ENCODE measurements at regions of chr17 and their contacts with region 1.

Region 1: DNA sequence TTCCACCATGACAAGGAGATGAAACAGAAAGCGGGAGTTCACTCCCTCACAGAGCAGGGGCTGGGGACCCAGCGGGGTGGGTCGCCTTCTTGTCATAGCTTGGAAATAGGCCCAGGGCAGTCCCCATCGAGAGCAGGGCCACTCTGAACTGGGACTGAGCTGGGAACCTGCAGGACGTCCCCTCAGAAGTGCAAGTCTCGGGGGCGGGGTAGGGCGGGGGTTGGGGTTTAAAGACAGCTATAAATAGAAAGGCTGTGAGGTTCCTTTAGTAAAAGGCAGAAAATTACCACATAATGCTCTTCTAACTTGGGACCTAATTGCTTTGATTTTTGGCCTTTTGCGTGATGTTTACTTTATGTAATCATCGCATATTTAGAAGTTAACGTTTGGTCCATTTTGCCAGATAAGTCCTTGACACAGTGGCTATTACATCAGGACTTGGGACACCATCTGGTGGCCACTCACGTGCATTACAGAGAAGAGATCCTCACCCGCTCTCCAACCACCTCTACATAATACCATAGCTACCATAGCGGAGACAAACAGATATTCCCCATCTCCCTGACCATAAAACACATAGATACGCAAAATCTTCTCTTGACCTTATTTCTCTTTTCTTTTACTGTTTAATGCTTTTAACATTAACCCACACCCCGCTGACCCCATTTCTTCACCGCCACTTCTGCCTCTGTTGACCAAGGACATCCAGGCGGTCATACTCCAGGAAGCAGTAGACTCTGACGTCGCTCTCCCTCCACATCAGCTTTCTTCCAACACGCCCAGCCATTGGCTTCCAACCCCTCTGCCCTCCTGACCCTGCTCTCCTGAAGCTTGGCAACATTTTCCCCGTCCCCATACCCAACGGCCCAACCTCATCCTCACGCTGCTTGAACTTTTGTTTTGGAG is 27.5 kb upstream of the PIK3R6 start:
- DNase-seq: peak in 12 of 14 experiments; percentile 23 to 79 (median 42)
- ATAC-seq: peak; percentile 20
- H3K4me3 ChIP-seq: no peak overlapping the region
- H3K4me3 Mint-ChIP-seq: peak overlapping the region; percentile 1
- H3K27ac ChIP-seq: no peak overlapping the region
- H3K27ac Mint-ChIP-seq: peak overlapping the region; percentile 93
- H3K4me1 ChIP-seq: peaks cover 61% of the 10 kb centered on the region
- H3K4me1 Mint-ChIP-seq: peaks cover 58% of the 10 kb centered on the region
- H3K27me3 ChIP-seq: no peaks in the 10 kb centered on the region
- H3K27me3 Mint-ChIP-seq: no peaks in the 10 kb centered on the region
- CTCF ChIP-seq: peak; percentile 77

Region 2: GRCh38 chr17:8383143-8383822 is 511.6 kb before region 1 on chr17 and contains the start of gene RPL26:
- CTCF ChIA-PET with region 1: no interaction called
- POLR2A ChIA-PET with region 1: no interaction called
- intact Hi-C with region 1: loop called in 1 of 2 experiments (anchors 5 kb)
- DNase-seq: peak; percentile 89 to 98 (median 93)
- ATAC-seq: peak; percentile 86
- H3K4me3 ChIP-seq: peak within 1 kb of the TSS; percentile 95
- H3K4me3 Mint-ChIP-seq: peak within 1 kb of the TSS; percentile 95
- H3K27ac ChIP-seq: peak within 1 kb of the TSS; percentile 72 to 76
- H3K27ac Mint-ChIP-seq: peak within 1 kb of the TSS; percentile 91
- H3K4me1 ChIP-seq: peaks cover 47% of the 10 kb centered on the region
- H3K4me1 Mint-ChIP-seq: peaks cover 64% of the 10 kb centered on the region
- H3K27me3 ChIP-seq: no peaks in the 10 kb centered on the region
- H3K27me3 Mint-ChIP-seq: no peaks in the 10 kb centered on the region
- CTCF ChIP-seq: peak; percentile 100
- total RNA-seq, gene RPL26: 2,959 to 3,104 TPM

Region 3: GRCh38 chr17:8753976-8754440 is 140.9 kb before region 1 on chr17:
- CTCF ChIA-PET with region 1: no interaction called
- POLR2A ChIA-PET with region 1: no interaction called
- intact Hi-C with region 1: loop called (anchors 5 to 10 kb)
- DNase-seq: peak in 2 of 14 experiments; percentile 11 to 29
- ATAC-seq: no peak
- H3K4me3 ChIP-seq: no peak overlapping the region
- H3K4me3 Mint-ChIP-seq: no peak overlapping the region
- H3K27ac ChIP-seq: no peak overlapping the region
- H3K27ac Mint-ChIP-seq: no peak overlapping the region
- H3K4me1 ChIP-seq: no peaks in the 10 kb centered on the region
- H3K4me1 Mint-ChIP-seq: no peaks in the 10 kb centered on the region
- H3K27me3 ChIP-seq: peaks cover 0 to 4% of the 10 kb centered on the region in 2 experiments
- H3K27me3 Mint-ChIP-seq: peaks cover 18% of the 10 kb centered on the region
- CTCF ChIP-seq: no peak

Region 4: DNA sequence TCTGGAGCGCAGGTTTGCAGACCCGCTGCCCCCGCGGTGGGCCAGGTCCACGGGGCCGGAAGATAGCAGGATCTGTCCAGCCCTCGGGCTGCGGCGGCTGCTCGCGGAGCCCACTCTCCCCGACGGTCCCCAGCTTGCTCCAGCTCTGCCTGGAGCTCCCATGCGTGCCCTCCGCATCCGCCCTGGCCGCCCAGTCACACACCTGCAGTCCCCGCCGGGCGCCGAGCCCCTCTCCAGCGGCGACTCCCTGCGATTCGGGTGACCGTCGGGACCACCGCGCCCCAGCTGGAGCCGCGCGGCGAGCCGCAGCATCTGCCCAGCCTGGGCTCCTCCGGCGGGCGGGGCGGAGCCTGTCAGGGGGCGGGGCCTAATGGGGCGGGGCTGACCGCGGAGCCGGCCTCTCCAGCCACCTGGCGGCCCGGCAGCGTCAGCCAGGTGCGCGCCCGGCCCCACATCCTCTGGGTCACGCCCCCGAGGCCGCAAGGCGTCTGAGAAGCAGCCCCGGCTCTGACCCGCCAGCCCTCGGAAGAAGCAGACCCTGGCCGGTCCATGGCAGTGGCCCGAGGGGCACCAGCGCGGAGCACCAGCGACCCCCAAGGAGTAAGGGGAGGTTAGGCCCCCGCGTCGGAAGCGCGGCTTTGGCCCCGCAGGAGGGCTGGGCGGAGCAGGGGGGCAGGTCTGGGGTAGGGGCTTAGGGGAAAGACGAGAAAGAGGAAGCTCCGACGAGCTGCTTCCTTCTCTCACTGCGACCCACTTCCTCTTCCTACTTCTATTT is 70.7 kb after region 1 on chr17 and contains the start of gene PIK3R5:
- CTCF ChIA-PET with region 1: interaction called, 5 read pairs
- POLR2A ChIA-PET with region 1: interaction called, 46 read pairs
- intact Hi-C with region 1: loop called (anchors 1 to 2 kb)
- DNase-seq: peak; percentile 67 to 91 (median 84)
- ATAC-seq: peak; percentile 73
- H3K4me3 ChIP-seq: peak within 1 kb of the TSS; percentile 99
- H3K4me3 Mint-ChIP-seq: peak within 1 kb of the TSS; percentile 95
- H3K27ac ChIP-seq: peak within 1 kb of the TSS; percentile 77 to 83
- H3K27ac Mint-ChIP-seq: peak within 1 kb of the TSS; percentile 90
- H3K4me1 ChIP-seq: peaks cover 51% of the 10 kb centered on the region
- H3K4me1 Mint-ChIP-seq: peaks cover 47% of the 10 kb centered on the region
- H3K27me3 ChIP-seq: no peaks in the 10 kb centered on the region
- H3K27me3 Mint-ChIP-seq: no peaks in the 10 kb centered on the region
- CTCF ChIP-seq: peak; percentile 36
- total RNA-seq, gene PIK3R5: 153 to 159 TPM

Region 5: DNA sequence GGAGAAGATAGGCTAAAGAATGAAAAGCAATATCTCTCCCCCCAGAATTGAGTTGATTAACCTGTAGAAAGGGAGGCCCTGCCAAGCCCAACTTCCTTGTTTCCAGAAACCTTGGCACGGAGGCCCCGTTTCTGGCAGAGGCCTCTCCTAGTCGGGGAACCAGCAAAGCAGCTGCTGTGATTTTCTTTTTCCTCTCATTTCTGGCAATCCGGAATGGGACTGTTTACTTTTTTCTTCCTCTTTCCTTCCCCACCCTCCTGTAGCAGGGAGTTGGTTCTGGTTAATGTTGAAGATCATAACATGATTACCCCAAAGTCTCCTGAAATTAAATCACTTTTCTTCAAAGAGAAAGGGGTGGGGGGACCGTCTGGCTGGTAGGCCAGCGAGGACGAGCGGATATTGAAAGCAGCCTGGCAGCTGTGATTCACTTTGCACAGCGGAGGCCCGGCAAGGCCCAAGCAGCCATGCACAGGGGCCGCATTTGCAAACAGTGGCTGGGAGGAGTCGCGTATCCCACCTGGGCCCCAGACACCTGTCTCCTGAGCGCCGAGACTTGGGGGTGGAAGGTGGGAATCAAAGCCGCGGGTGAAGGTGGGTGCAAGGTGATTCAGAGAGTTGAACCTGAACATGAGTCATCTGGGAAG is 177.9 kb after region 1 on chr17:
- CTCF ChIA-PET with region 1: no interaction called
- POLR2A ChIA-PET with region 1: no interaction called
- intact Hi-C with region 1: no loop called
- DNase-seq: no peak
- ATAC-seq: no peak
- H3K4me3 ChIP-seq: no peak overlapping the region
- H3K4me3 Mint-ChIP-seq: no peak overlapping the region
- H3K27ac ChIP-seq: no peak overlapping the region
- H3K27ac Mint-ChIP-seq: no peak overlapping the region
- H3K4me1 ChIP-seq: no peaks in the 10 kb centered on the region
- H3K4me1 Mint-ChIP-seq: peaks cover 11% of the 10 kb centered on the region
- H3K27me3 ChIP-seq: peaks cover 0 to 7% of the 10 kb centered on the region in 2 experiments
- H3K27me3 Mint-ChIP-seq: peaks cover 8% of the 10 kb centered on the region
- CTCF ChIP-seq: no peak

Measured in CD4-positive, alpha-beta T cell (primary cell).